ENCODE measurements at regions of chr6 and their contacts with region 1.

Region 1: DNA sequence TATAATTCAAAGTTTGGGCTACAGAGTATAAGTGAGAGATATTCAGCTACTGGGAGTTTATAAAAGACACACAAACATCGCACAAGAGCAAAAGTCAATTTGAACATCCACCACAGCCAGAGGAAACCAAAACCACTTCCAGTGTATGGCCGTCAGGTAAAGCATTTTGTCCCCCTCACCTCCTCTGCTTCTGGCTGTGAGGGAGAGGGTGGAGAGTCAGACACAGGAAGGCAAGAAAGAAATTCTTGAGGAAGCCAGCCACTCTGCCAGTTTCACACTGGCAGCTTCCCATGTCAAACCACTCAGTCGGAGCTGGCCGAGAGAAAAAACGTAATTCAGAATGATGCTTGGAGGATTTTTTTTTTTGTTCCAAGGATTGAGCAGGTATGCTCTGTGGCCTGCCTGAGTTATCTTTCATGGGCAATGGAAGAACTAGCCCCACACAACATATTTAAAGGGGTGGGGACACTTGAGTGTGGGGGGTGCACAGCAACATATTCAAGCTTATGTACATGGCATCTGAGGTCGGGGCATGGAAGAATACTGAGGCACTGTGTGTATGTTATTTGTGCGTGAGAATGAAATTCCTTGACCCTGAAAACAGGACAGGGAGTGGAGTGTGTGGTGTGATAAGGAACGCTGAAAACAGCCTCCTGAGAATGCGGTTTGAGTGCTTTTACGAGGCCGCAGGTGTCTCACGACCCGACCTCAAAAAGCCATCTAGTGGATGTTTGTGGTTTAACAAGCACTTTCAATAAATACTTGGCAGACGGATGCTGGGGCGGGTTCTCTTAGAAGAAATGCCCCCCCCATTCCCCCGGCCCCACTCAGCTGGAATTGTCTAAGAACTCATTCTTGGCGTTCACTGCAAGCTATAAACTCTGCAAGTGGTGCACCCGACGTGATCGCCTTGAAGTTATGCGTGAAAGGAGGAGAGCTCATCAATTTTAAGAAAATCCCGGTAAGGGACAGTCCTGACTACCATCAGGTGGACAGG is 27.5 kb upstream of the ZBTB22 start:
- DNase-seq: peak; percentile 47 to 90 (median 70)
- ATAC-seq: peak; percentile 64 to 74 (median 72)
- H3K4me3 ChIP-seq: peak overlapping the region; percentile 39 to 54
- H3K4me3 Mint-ChIP-seq: peak overlapping the region; percentile 73 to 84 (median 76)
- H3K27ac ChIP-seq: peak overlapping the region; percentile 94
- H3K27ac Mint-ChIP-seq: peak overlapping the region; percentile 92 to 94
- H3K4me1 ChIP-seq: peaks cover 24 to 48% of the 10 kb centered on the region in 2 experiments
- H3K4me1 Mint-ChIP-seq: peaks cover 36 to 54% (median 47%) of the 10 kb centered on the region in 3 donors
- H3K27me3 ChIP-seq: no peaks in the 10 kb centered on the region
- H3K27me3 Mint-ChIP-seq: no peaks in the 10 kb centered on the region

Region 2: DNA sequence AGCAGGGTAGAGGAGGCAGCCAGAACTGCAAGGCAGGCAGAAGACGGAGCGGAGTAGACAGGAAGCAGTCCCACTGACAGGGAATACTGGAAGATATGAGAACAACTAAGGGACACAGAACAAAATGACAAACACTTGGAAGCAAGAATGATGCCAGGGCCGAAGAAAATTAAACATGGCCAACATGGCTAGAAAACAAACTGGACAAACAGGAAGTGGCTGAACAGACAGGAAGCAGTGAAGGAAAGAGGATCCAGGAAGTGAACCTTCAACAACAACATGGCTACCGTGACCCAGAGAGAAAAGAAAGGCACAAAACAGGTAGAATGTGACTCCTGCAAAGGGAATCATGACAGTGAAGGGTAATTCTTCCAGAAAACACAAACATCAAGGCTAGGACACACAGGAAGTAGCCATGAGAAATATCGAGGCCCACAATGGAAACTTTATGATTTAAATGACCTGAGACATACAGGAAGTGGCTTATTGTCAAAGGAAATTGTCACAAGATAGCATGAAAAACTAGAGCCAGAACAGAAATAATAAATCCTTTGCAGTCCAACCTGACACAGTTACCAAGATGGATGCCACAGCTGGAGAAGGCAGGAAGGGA is 161.8 kb before region 1 on chr6:
- CTCF ChIA-PET with region 1: no interaction called
- POLR2A ChIA-PET with region 1: no interaction called
- DNase-seq: peak in 1 of 35 experiments; percentile 31
- ATAC-seq: peak in 2 of 4 experiments; percentile 50 to 60
- H3K4me3 ChIP-seq: no peak overlapping the region
- H3K4me3 Mint-ChIP-seq: peak overlapping the region; percentile 31 to 60 (median 31)
- H3K27ac ChIP-seq: peak overlapping the region; percentile 45
- H3K27ac Mint-ChIP-seq: peak overlapping the region; percentile 94
- H3K4me1 ChIP-seq: peaks cover 8 to 23% of the 10 kb centered on the region in 2 experiments
- H3K4me1 Mint-ChIP-seq: peaks cover 24 to 25% (median 25%) of the 10 kb centered on the region in 3 donors
- H3K27me3 ChIP-seq: peaks cover 0 to 24% of the 10 kb centered on the region in 2 experiments
- H3K27me3 Mint-ChIP-seq: peaks cover 10 to 23% of the 10 kb centered on the region in 2 donors

Region 3: DNA sequence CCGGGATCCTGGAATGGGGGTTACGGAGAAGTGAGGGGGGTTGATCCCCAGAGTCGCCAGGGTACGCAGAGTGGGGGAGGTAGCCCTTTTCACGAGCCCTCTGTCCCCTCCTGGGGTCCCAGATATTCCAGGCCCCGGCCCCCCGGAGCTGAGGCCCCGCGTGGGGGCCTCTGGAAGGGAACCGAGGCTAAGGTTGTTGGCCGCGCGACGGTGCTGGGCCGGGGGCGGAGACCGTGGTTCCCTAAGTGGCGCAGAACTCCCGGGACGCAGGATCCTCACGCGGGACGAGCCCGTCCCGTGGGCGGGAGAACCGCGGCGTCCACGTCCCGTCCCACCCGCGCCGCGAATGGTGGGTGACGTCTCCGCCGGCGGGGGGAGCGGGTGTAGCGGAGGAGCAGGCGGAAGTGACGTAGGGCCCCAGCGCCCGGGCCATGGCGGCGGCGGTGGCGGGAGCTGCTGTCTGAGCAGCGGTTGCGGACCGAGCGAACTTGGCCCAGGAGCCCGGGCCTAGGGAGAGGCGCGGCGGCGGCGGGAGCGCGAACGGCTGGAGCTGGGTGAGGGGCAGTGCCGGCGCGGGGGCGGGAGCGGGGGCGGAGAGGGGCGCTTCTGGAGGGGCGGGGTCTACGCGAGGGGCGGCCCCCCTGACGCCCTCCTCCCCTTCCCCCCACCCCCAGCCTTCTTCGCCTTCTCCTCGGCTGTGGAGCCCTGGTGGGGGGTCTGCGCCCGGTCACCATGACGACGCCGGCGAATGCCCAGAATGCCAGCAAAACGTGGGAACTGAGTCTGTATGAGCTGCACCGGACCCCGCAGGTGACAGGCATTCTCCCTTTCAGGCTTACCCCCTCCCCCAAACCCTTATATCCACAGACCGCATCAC is 136.7 kb before region 1 on chr6 and contains the start of gene RING1:
- CTCF ChIA-PET with region 1: interaction called in 1 of 2 experiments, 11 read pairs
- POLR2A ChIA-PET with region 1: no interaction called
- DNase-seq: peak; percentile 74 to 94 (median 85)
- ATAC-seq: peak; percentile 64 to 75 (median 68)
- H3K4me3 ChIP-seq: peak within 1 kb of the TSS; percentile 84 to 98
- H3K4me3 Mint-ChIP-seq: peak within 1 kb of the TSS; percentile 81 to 89 (median 87)
- H3K27ac ChIP-seq: peak within 1 kb of the TSS; percentile 93
- H3K27ac Mint-ChIP-seq: peak within 1 kb of the TSS; percentile 83 to 84
- H3K4me1 ChIP-seq: peaks cover 13 to 53% of the 10 kb centered on the region in 2 experiments
- H3K4me1 Mint-ChIP-seq: peaks cover 51 to 57% (median 53%) of the 10 kb centered on the region in 3 donors
- H3K27me3 ChIP-seq: peaks cover 0 to 18% of the 10 kb centered on the region in 2 experiments
- H3K27me3 Mint-ChIP-seq: peaks cover 0 to 18% of the 10 kb centered on the region in 2 donors
- total RNA-seq, gene RING1: 37.7 to 43.8 (median 42.6) TPM

Region 4: DNA sequence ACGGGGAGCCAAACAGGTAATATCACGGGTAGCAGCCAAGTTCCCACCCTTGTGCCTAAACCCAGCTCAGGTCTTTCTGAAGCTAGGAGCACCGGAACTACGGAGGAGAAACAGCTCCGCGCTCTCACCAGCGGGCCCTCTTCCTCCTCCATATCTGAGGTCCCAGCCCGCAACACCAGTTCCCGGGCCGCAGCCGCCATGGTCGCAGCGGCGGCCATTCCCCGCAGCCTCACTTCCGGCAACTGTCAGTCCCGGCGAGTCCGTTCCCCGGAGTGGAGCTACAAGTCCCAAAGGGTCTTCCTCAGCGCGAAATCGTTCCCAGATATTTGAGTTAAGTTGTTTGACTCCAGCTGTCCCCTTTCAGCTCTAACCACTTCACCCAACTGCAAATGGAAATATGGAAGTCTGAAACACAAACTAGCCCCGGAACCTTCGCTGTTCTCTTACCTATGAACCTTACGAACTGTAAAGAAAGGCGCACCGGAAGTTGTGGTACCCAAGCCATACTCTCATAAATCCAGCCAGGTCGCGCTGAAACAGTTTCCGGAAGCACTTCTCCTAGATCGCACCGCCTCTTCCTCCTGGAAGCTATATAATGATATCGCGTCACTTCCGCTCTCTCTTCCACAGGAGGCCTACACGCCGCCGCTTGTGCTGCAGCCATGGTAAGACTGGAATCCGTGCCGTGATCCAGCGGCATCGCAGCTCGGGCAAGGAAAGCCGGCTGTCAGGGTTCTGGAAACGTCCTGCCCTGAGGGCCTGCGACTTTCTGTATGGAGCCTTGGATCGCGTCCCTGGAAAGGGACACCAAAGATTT is 73.3 kb before region 1 on chr6 and contains the starts of genes RPS18 and VPS52:
- CTCF ChIA-PET with region 1: interaction called in 1 of 2 experiments, 16 read pairs
- POLR2A ChIA-PET with region 1: interaction called in 1 of 2 experiments, 5 read pairs
- DNase-seq: peak; percentile 79 to 99 (median 92)
- ATAC-seq: peak; percentile 82 to 93 (median 90)
- H3K4me3 ChIP-seq: peak within 1 kb of the TSS; percentile 70 to 73
- H3K4me3 Mint-ChIP-seq: peak within 1 kb of the TSS; percentile 92 to 98 (median 94)
- H3K27ac ChIP-seq: peak within 1 kb of the TSS; percentile 85
- H3K27ac Mint-ChIP-seq: peak within 1 kb of the TSS; percentile 98 to 99
- H3K4me1 ChIP-seq: peaks cover 37 to 59% of the 10 kb centered on the region in 2 experiments
- H3K4me1 Mint-ChIP-seq: peaks cover 55 to 68% (median 60%) of the 10 kb centered on the region in 3 donors
- H3K27me3 ChIP-seq: no peaks in the 10 kb centered on the region
- H3K27me3 Mint-ChIP-seq: no peaks in the 10 kb centered on the region
- total RNA-seq, gene RPS18: 3,249 to 4,871 (median 4,590) TPM
- total RNA-seq, gene VPS52: 81.4 to 100 (median 87.6) TPM

Region 5: GRCh38 chr6:33299237-33299944 is 45.6 kb before region 1 on chr6:
- CTCF ChIA-PET with region 1: interaction called, 3 to 16 read pairs
- POLR2A ChIA-PET with region 1: interaction called, 4 to 6 read pairs
- DNase-seq: peak; percentile 88 to 95 (median 93)
- ATAC-seq: peak; percentile 82 to 84 (median 84)
- H3K4me3 ChIP-seq: peak overlapping the region; percentile 89 to 91
- H3K4me3 Mint-ChIP-seq: peak overlapping the region; percentile 95 to 99 (median 99)
- H3K27ac ChIP-seq: peak overlapping the region; percentile 88
- H3K27ac Mint-ChIP-seq: peak overlapping the region; percentile 99 to 100
- H3K4me1 ChIP-seq: peaks cover 7 to 39% of the 10 kb centered on the region in 2 experiments
- H3K4me1 Mint-ChIP-seq: peaks cover 34 to 59% (median 42%) of the 10 kb centered on the region in 3 donors
- H3K27me3 ChIP-seq: no peaks in the 10 kb centered on the region
- H3K27me3 Mint-ChIP-seq: no peaks in the 10 kb centered on the region

Region 6: GRCh38 chr6:33312409-33313158 is 32.4 kb before region 1 on chr6:
- CTCF ChIA-PET with region 1: interaction called in 1 of 2 experiments, 40 read pairs
- POLR2A ChIA-PET with region 1: interaction called, 4 to 6 read pairs
- DNase-seq: peak; percentile 31 to 95 (median 88)
- ATAC-seq: peak; percentile 35 to 57 (median 48)
- H3K4me3 ChIP-seq: peak overlapping the region; percentile 93 to 99
- H3K4me3 Mint-ChIP-seq: peak overlapping the region; percentile 98 to 100 (median 99)
- H3K27ac ChIP-seq: peak overlapping the region; percentile 99
- H3K27ac Mint-ChIP-seq: peak overlapping the region; percentile 97 to 98
- H3K4me1 ChIP-seq: peaks cover 20 to 72% of the 10 kb centered on the region in 2 experiments
- H3K4me1 Mint-ChIP-seq: peaks cover 61 to 67% (median 64%) of the 10 kb centered on the region in 3 donors
- H3K27me3 ChIP-seq: no peaks in the 10 kb centered on the region
- H3K27me3 Mint-ChIP-seq: no peaks in the 10 kb centered on the region

Region 7: DNA sequence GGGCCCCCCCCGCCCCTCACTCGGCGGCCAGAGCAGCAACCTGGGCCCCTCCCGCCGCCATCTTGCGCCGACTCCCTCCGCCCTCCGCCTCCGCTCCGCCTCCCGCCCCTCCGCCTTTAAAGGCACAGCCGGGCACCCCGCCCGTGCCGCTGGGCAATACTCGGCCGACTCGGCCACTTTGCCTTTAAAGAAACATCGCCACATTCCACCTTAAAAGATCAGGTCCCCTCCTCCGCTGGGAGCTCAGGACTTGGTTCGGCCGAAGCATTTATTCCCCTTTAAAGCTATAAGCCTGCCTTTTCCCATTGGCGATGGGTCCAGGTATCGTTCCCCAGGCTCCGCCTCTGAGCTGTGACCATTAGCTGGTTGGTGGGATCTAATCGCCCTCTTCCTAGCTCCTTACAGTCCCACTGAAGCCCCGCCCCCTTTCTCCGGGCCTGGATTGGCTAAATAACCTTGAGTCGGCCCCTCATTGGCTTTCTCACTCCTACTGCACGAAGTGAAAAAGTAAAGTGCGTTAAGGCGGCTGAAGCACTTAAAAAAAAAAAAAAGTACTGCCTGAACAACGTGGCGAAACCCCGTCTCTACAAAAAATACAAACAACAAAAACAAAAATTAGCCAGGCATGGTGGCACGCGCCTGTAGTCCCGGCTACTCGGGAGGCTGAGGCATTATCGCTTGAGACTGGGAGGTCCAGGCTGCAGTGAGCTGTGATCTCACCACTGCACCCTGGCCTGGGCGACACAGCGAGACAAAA is 27.2 kb before region 1 on chr6 and contains the start of gene ZBTB22:
- CTCF ChIA-PET with region 1: interaction called, 3 to 40 read pairs
- POLR2A ChIA-PET with region 1: interaction called, 6 read pairs
- DNase-seq: peak; percentile 90 to 98 (median 96)
- ATAC-seq: peak; percentile 67 to 76 (median 68)
- H3K4me3 ChIP-seq: peak within 1 kb of the TSS; percentile 93 to 97
- H3K4me3 Mint-ChIP-seq: peak within 1 kb of the TSS; percentile 98 to 100 (median 98)
- H3K27ac ChIP-seq: peak within 1 kb of the TSS; percentile 85
- H3K27ac Mint-ChIP-seq: peak within 1 kb of the TSS; percentile 99
- H3K4me1 ChIP-seq: peaks cover 38 to 77% of the 10 kb centered on the region in 2 experiments
- H3K4me1 Mint-ChIP-seq: peaks cover 76 to 82% (median 78%) of the 10 kb centered on the region in 3 donors
- H3K27me3 ChIP-seq: no peaks in the 10 kb centered on the region
- H3K27me3 Mint-ChIP-seq: no peaks in the 10 kb centered on the region
- total RNA-seq, gene ZBTB22: 17.6 to 32.0 (median 26.3) TPM